ENCODE measurements at regions of chr3 and their contacts with region 1.

Region 1: GRCh38 chr3:167671878-167672427 is 18.2 kb upstream of the WDR49 start:
- DNase-seq: no peak
- CTCF ChIP-seq: no peak

Region 2: GRCh38 chr3:167684388-167684993 is 12.5 kb after region 1 on chr3:
- CTCF ChIA-PET with region 1: interaction called, 32 read pairs
- POLR2A ChIA-PET with region 1: no interaction called
- DNase-seq: peak; percentile 36
- CTCF ChIP-seq: peak; percentile 61

Measured in GM10248 (cell line).